PC-9 (cell line): ENCODE measurements at regions of chrX and their contacts with region 1.

Region 1: DNA sequence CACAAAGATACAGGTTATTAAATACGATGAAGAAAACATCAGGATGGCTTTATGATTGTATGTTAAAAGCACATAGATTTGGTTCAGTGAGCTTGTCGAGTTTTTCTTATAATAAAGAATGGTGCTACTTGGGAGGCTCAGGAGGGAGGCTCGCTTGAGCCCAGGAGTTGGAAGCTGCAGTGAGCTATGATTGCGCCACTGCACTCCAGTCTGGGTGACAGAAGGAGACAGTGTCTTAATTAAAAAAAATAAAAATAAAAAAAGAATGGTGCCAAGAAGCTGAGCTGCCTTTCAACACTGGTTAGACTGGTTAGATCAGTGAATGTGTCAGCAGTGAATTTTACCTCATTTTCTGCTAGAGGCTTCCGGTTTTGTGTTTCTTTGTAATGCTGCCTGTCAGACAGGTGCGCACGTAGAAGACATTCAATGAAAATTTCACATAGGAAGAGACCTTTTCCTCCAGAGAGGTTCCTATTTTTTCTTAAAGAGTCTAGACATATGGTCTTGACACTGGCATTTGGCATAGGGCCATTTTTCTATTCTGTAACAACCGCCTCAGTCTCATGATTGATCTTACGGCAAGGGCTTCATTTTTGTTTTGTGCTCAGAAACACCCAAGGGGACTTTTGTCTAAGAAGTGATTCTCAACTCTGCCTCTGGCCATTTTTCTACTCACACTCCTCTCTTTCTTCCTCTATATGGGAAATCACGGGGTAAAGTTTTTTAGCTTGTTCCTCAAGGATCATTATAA is 15.0 kb upstream of the ARSF start:
- DNase-seq: peak; percentile 18 to 82
- H3K4me3 ChIP-seq: peak overlapping the region; percentile 38; the same call in 1 of the 2 replicates
- H3K27ac ChIP-seq: no peak overlapping the region
- H3K4me1 ChIP-seq: peaks cover 7% of the 10 kb centered on the region
- H3K27me3 ChIP-seq: no peaks in the 10 kb centered on the region
- CTCF ChIP-seq: no peak

Region 2: DNA sequence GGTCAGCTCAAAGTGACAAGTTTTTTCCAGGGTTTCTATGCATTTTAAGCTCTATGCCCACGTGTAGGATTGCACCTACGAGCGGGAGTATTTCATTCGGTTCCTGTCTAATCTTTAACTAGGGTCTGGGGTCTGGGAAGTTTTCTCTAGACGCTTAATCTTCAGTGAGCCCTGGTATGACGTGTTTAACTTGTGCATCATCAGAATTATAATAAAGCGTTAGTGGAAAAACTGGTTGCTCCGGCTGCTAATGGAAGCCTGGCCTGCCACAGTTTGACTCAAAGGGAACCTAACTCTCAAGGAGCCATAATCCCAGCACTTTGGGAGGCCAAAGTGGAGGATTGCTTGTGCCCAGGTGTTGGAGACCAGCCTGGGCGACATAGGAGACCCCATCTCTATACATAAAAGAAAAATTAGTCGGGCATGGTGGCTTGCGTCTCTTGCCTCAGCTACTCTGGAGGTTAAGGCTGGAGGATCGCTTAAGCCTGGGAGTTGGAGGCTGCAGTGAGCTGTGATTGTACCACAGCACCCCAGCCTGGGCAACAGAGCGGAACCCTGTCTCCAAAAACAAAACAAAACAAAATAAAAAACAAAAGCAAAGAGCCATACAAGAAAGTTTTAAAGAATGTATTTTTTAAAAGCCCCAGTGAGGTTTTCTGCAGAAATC is 127.3 kb before region 1 on chrX:
- CTCF ChIA-PET with region 1: no interaction called
- POLR2A ChIA-PET with region 1: no interaction called
- intact Hi-C with region 1: loop called (anchors 2 kb)
- DNase-seq: peak; percentile 31 to 72
- H3K4me3 ChIP-seq: peak overlapping the region; percentile 46; the same call in 1 of the 2 replicates
- H3K27ac ChIP-seq: peak overlapping the region; percentile 79
- H3K4me1 ChIP-seq: peaks cover 44% of the 10 kb centered on the region
- H3K27me3 ChIP-seq: no peaks in the 10 kb centered on the region
- CTCF ChIP-seq: no peak